Naive thymus-derived CD4-positive, alpha-beta T cell (primary cell): ENCODE measurements at regions of chr2 and their contacts with region 1.

Region 1: GRCh38 chr2:54106631-54107454 is 8.6 kb upstream of the ACYP2 start:
- DNase-seq: peak in 7 of 9 donors; percentile 39 to 68 (median 51)
- ATAC-seq: peak; percentile 86
- H3K4me3 ChIP-seq: no peak overlapping the region
- H3K4me3 Mint-ChIP-seq: peak overlapping the region in 1 of 10 donors; percentile 28
- H3K27ac ChIP-seq: no peak overlapping the region
- H3K27ac Mint-ChIP-seq: peak overlapping the region in 2 of 9 donors; percentile 20 to 31
- H3K4me1 ChIP-seq: peaks cover 0 to 4% of the 10 kb centered on the region in 2 donors
- H3K4me1 Mint-ChIP-seq: peaks cover 0 to 12% (median 9%) of the 10 kb centered on the region in 7 donors
- H3K27me3 ChIP-seq: no peaks in the 10 kb centered on the region
- H3K27me3 Mint-ChIP-seq: peaks cover 0 to 15% (median 0%) of the 10 kb centered on the region in 5 donors

Region 2: GRCh38 chr2:53865264-53865663 is 241.6 kb before region 1 on chr2:
- CTCF ChIA-PET with region 1: interaction called, 10 read pairs
- POLR2A ChIA-PET with region 1: no interaction called
- intact Hi-C with region 1: no loop called
- DNase-seq: no peak
- ATAC-seq: no peak
- H3K4me3 ChIP-seq: no peak overlapping the region
- H3K4me3 Mint-ChIP-seq: no peak overlapping the region
- H3K27ac ChIP-seq: no peak overlapping the region
- H3K27ac Mint-ChIP-seq: peak overlapping the region in 1 of 9 donors; percentile 62
- H3K4me1 ChIP-seq: peaks cover 0 to 15% of the 10 kb centered on the region in 2 donors
- H3K4me1 Mint-ChIP-seq: peaks cover 6 to 32% (median 22%) of the 10 kb centered on the region in 7 donors
- H3K27me3 ChIP-seq: no peaks in the 10 kb centered on the region
- H3K27me3 Mint-ChIP-seq: no peaks in the 10 kb centered on the region

Region 3: DNA sequence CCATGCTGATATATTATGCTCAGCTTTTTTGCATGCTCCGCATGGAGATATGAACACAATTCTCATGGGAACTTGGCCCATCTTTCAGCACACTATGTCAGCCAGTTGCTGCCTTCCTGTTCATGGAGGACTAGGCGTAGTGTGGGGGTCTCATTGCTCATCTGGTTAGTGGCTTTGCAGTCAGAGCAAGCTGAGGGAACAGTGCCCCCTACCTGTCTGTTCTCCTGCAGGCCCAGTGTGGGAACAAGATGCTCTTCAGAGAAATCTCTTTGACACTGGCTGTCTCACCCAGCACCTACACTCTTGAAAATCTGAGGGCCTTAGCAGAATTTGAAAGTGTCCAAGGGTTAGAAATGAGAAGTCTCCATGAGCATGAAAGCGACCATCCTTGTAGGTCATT is 396.3 kb after region 1 on chr2:
- CTCF ChIA-PET with region 1: no interaction called
- POLR2A ChIA-PET with region 1: no interaction called
- intact Hi-C with region 1: loop called (anchors 1 kb)
- DNase-seq: peak in 1 of 9 donors; percentile 15
- ATAC-seq: no peak
- H3K4me3 ChIP-seq: no peak overlapping the region
- H3K4me3 Mint-ChIP-seq: no peak overlapping the region
- H3K27ac ChIP-seq: no peak overlapping the region
- H3K27ac Mint-ChIP-seq: no peak overlapping the region
- H3K4me1 ChIP-seq: no peaks in the 10 kb centered on the region
- H3K4me1 Mint-ChIP-seq: no peaks in the 10 kb centered on the region
- H3K27me3 ChIP-seq: no peaks in the 10 kb centered on the region
- H3K27me3 Mint-ChIP-seq: peaks cover 0 to 19% (median 0%) of the 10 kb centered on the region in 5 donors

Region 4: GRCh38 chr2:54657664-54658083 is 550.8 kb after region 1 on chr2:
- CTCF ChIA-PET with region 1: no interaction called
- POLR2A ChIA-PET with region 1: no interaction called
- intact Hi-C with region 1: loop called in 1 of 2 experiments (anchors 5 kb)
- DNase-seq: peak in 2 of 9 donors; percentile 17
- ATAC-seq: peak; percentile 74
- H3K4me3 ChIP-seq: no peak overlapping the region
- H3K4me3 Mint-ChIP-seq: peak overlapping the region in 2 of 10 donors; percentile 32 to 62
- H3K27ac ChIP-seq: no peak overlapping the region
- H3K27ac Mint-ChIP-seq: peak overlapping the region; percentile 33 to 94 (median 51)
- H3K4me1 ChIP-seq: no peaks in the 10 kb centered on the region
- H3K4me1 Mint-ChIP-seq: peaks cover 0 to 29% (median 0%) of the 10 kb centered on the region in 7 donors
- H3K27me3 ChIP-seq: no peaks in the 10 kb centered on the region
- H3K27me3 Mint-ChIP-seq: no peaks in the 10 kb centered on the region

Region 5: DNA sequence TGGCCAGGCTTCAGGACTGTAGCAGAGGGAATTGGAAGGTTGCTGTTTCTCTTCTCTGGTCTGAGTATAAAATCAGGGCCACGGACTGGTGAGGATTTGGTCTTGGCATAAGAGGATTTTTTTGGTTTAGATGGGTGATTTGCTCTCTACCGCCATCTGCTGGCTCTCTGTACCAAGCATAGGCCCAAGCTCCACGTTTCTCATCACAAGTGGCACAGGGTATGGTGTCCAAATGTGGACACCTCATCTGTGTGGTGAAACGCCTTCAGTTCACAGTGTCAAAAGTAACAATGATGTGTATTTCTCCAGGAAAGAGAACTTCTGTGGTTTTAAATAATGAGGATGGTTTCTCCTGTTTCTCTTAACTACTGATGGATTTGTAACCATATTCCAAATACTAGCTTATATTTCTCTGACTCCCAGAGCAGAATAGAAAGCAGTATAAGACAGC is 731.8 kb after region 1 on chr2:
- CTCF ChIA-PET with region 1: interaction called, 28 read pairs
- POLR2A ChIA-PET with region 1: no interaction called
- intact Hi-C with region 1: loop called in 1 of 2 experiments (anchors 1 kb)
- DNase-seq: peak; percentile 25 to 61 (median 45)
- ATAC-seq: peak; percentile 87
- H3K4me3 ChIP-seq: no peak overlapping the region
- H3K4me3 Mint-ChIP-seq: no peak overlapping the region
- H3K27ac ChIP-seq: no peak overlapping the region
- H3K27ac Mint-ChIP-seq: no peak overlapping the region
- H3K4me1 ChIP-seq: no peaks in the 10 kb centered on the region
- H3K4me1 Mint-ChIP-seq: no peaks in the 10 kb centered on the region
- H3K27me3 ChIP-seq: no peaks in the 10 kb centered on the region
- H3K27me3 Mint-ChIP-seq: peaks cover 0 to 2% (median 0%) of the 10 kb centered on the region in 5 donors

Region 6: GRCh38 chr2:55010149-55010591 is 903.3 kb after region 1 on chr2:
- CTCF ChIA-PET with region 1: no interaction called
- POLR2A ChIA-PET with region 1: no interaction called
- intact Hi-C with region 1: loop called in 1 of 2 experiments (anchors 5 kb)
- DNase-seq: peak; percentile 15 to 71 (median 60)
- ATAC-seq: peak; percentile 94
- H3K4me3 ChIP-seq: peak overlapping the region; percentile 58
- H3K4me3 Mint-ChIP-seq: peak overlapping the region; percentile 88 to 97 (median 92)
- H3K27ac ChIP-seq: peak overlapping the region; percentile 68
- H3K27ac Mint-ChIP-seq: peak overlapping the region; percentile 82 to 96 (median 90)
- H3K4me1 ChIP-seq: peaks cover 27 to 29% of the 10 kb centered on the region in 2 donors
- H3K4me1 Mint-ChIP-seq: peaks cover 44 to 91% (median 79%) of the 10 kb centered on the region in 7 donors
- H3K27me3 ChIP-seq: no peaks in the 10 kb centered on the region
- H3K27me3 Mint-ChIP-seq: no peaks in the 10 kb centered on the region